ENCODE measurements at regions of chr1 and their contacts with region 1.

Region 1: DNA sequence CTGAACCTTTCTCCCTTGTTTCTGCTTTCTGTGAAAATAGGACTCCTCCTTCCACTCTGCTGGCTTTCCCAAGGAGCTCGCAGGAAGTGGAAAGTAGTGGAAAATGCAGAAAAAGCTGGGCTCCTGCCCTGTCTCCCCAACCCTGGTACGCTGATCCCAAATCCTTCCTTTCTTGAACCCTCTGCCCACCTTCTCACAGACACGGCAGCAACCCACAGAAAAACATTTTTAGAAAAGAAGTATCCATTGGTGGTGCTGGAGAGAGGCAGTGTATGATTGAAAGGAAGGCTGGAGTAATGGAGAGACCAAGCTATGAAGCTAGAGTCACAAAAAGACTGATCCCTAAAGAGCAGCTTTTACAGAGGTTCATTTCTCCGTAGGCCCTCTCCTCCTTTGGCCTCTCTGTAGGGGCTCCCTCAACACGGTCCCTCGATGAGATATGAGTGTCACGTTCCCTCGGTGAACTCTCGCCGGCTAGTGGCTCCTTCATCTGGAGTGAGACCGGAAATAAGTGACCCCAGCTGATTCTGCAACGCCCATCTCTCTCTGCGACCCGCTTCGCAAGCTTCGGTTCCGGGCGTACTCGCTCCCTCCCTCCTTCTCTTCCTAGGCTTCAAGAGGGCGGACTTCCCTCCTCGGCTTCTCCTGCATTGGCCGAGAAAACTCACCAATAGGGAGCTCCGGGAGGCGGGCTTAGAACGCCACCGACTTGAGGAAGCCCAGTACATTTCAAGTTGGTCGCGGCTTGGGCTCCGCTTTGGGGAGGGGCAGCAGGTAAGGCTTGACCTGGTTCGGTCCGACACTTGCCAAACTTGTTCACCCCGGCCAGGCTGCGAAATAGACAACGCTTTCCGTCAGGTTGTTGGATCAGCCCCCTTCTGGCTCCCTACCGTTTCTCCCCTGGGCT is at the starts of genes ANKRD34A and POLR3GL:
- DNase-seq: peak; percentile 95 to 99 (median 98)
- H3K4me3 ChIP-seq: peak within 1 kb of the TSS; percentile 26 to 78 (median 53)
- H3K27ac ChIP-seq: peak within 1 kb of the TSS; percentile 80 to 91 (median 85)
- H3K4me1 ChIP-seq: peaks cover 26 to 49% of the 10 kb centered on the region in 2 donors
- H3K27me3 ChIP-seq: no peaks in the 10 kb centered on the region
- CTCF ChIP-seq: no peak
- POLR2A ChIP-seq: peak in 1 of 2 donors; percentile 98
- total RNA-seq, gene ANKRD34A: 0.24 to 2.5 (median 0.88) TPM
- total RNA-seq, gene POLR3GL: 18.4 to 35.2 (median 30.5) TPM

Region 2: GRCh38 chr1:145730900-145731299 is 233.3 kb before region 1 on chr1:
- intact Hi-C with region 1: no loop called
- DNase-seq: no peak
- H3K4me3 ChIP-seq: no peak overlapping the region
- H3K27ac ChIP-seq: no peak overlapping the region
- H3K4me1 ChIP-seq: peaks cover 4 to 7% of the 10 kb centered on the region in 2 donors
- H3K27me3 ChIP-seq: no peaks in the 10 kb centered on the region
- CTCF ChIP-seq: no peak
- POLR2A ChIP-seq: no peak

Region 3: GRCh38 chr1:145918144-145918992 is 45.9 kb before region 1 on chr1 and contains the start of gene PEX11B:
- intact Hi-C with region 1: loop called in 1 of 2 experiments (anchors 5 kb)
- DNase-seq: peak; percentile 86 to 94 (median 90)
- H3K4me3 ChIP-seq: peak within 1 kb of the TSS; percentile 14 to 85 (median 74)
- H3K27ac ChIP-seq: peak within 1 kb of the TSS; percentile 37 to 89 (median 77)
- H3K4me1 ChIP-seq: peaks cover 8 to 40% of the 10 kb centered on the region in 2 donors
- H3K27me3 ChIP-seq: no peaks in the 10 kb centered on the region
- CTCF ChIP-seq: peak in 1 of 6 experiments; percentile 26
- POLR2A ChIP-seq: peak; percentile 18 to 35
- total RNA-seq, gene PEX11B: 24.8 to 44.4 (median 33.0) TPM

Region 4: DNA sequence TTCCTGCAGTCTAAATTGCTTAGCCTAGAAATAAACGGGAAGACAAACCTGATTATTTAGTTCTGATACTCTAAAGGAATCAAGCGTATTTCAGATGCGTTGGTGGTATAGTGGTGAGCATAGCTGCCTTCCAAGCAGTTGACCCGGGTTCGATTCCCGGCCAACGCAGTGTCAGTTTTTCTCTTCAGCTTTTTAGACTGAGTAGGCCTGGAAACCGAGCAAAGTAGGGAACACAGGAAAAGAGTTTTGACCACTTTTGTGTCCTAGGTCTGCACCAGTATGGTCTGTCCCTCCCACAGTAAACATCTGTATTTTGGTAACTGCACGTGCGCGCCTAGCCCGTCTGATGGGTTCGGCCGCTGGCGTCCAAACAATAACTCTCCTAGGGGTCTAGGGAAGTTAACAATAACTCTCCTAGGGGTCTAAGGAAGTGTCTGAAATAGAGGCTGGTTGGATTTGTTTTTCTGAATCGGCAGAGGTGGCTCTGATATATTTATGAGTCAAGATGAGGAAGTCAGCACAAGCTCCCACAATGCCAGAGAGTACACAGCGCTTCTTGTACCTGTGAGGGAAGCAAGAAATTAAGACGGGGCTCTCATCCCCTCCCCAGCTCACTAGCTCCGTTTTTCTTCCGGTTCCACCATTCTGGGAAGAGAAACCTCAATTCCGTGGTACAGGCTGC is 72.9 kb after region 1 on chr1:
- intact Hi-C with region 1: loop called in 1 of 2 experiments (anchors 10 kb)
- DNase-seq: peak; percentile 77 to 96 (median 84)
- H3K4me3 ChIP-seq: peak overlapping the region; percentile 2 to 62 (median 13)
- H3K27ac ChIP-seq: peak overlapping the region; percentile 63 to 92 (median 72)
- H3K4me1 ChIP-seq: peaks cover 0 to 11% of the 10 kb centered on the region in 2 donors
- H3K27me3 ChIP-seq: no peaks in the 10 kb centered on the region
- CTCF ChIP-seq: no peak
- POLR2A ChIP-seq: peak in 1 of 2 donors; percentile 32

Measured in adrenal gland (tissue), 19 donors.